Aorta (tissue), 5 donors: ENCODE measurements at regions of chr20 and their contacts with region 1.

Region 1: GRCh38 chr20:39873286-39873685 is 815.8 kb downstream of the MAFB start:
- DNase-seq: no peak
- ATAC-seq: no peak
- H3K4me3 ChIP-seq: no peak overlapping the region
- H3K27ac ChIP-seq: no peak overlapping the region
- H3K4me1 ChIP-seq: no peaks in the 10 kb centered on the region
- H3K27me3 ChIP-seq: no peaks in the 10 kb centered on the region

Region 2: GRCh38 chr20:39264506-39265172 is 608.6 kb before region 1 on chr20:
- intact Hi-C with region 1: loop called in 1 of 2 experiments (anchors 2 kb)
- DNase-seq: peak; percentile 66 to 82
- ATAC-seq: peak; percentile 74
- H3K4me3 ChIP-seq: no peak overlapping the region
- H3K27ac ChIP-seq: no peak overlapping the region
- H3K4me1 ChIP-seq: no peaks in the 10 kb centered on the region
- H3K27me3 ChIP-seq: no peaks in the 10 kb centered on the region

Region 3: GRCh38 chr20:39775110-39775509 is 98.2 kb before region 1 on chr20:
- intact Hi-C with region 1: no loop called
- DNase-seq: peak; percentile 74 to 81
- ATAC-seq: peak; percentile 63
- H3K4me3 ChIP-seq: no peak overlapping the region
- H3K27ac ChIP-seq: no peak overlapping the region
- H3K4me1 ChIP-seq: no peaks in the 10 kb centered on the region
- H3K27me3 ChIP-seq: no peaks in the 10 kb centered on the region